Naive thymus-derived CD4-positive, alpha-beta T cell (primary cell): ENCODE measurements at regions of chr6 and their contacts with region 1.

Region 1: DNA sequence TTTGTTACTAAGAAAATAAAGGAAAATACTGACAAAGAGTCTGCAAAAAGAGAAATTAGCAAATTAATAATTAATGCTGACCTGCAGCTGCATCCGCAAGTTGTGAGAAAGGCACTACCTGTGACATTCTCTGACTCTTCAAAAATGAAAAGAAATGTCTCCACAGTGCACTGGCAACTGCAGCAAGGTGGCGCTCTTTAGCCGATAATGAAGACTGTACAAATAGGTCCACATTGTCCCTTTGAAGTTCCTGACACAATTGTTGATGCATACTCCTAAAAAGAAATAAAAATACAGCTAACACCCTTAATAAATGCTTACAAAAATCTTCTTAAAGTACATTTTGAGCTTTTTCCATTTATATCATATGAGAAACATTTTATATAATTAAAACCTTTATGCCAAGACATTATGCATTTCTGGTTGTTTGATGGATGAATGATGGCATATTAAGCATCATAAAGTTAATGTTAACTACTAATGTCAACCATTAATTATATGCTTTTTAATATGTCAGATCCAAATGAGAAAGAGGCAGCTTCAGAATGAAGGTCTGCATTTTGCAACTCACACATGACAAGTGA is 96.5 kb downstream of the MMS22L start:
- DNase-seq: peak; percentile 16 to 61 (median 48)
- ATAC-seq: peak; percentile 78
- H3K4me3 ChIP-seq: no peak overlapping the region
- H3K4me3 Mint-ChIP-seq: no peak overlapping the region
- H3K27ac ChIP-seq: no peak overlapping the region
- H3K27ac Mint-ChIP-seq: no peak overlapping the region
- H3K4me1 ChIP-seq: no peaks in the 10 kb centered on the region
- H3K4me1 Mint-ChIP-seq: peaks cover 0 to 3% (median 0%) of the 10 kb centered on the region in 7 donors
- H3K27me3 ChIP-seq: no peaks in the 10 kb centered on the region
- H3K27me3 Mint-ChIP-seq: no peaks in the 10 kb centered on the region

Region 2: DNA sequence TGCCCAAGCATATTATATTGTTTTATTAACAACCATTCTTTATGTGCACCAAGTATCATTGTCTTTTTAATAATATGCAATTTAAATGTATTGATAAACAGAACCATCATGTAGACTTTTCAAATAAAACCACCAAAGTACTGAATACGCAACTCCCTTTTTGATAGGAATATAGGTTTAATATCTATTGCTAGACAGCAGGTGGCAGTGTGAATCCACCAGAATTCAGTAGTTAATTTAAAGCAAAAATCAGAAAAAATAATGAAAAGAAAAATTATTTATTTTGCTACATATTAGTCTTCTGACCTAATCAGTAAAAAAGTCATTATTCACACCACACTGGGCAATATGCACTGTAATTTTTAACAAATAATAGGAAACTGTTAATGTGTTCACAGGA is 118.3 kb before region 1 on chr6:
- CTCF ChIA-PET with region 1: no interaction called
- POLR2A ChIA-PET with region 1: no interaction called
- intact Hi-C with region 1: loop called in 1 of 2 experiments (anchors 1 kb)
- DNase-seq: peak in 2 of 9 donors; percentile 8
- ATAC-seq: no peak
- H3K4me3 ChIP-seq: no peak overlapping the region
- H3K4me3 Mint-ChIP-seq: no peak overlapping the region
- H3K27ac ChIP-seq: no peak overlapping the region
- H3K27ac Mint-ChIP-seq: no peak overlapping the region
- H3K4me1 ChIP-seq: no peaks in the 10 kb centered on the region
- H3K4me1 Mint-ChIP-seq: no peaks in the 10 kb centered on the region
- H3K27me3 ChIP-seq: no peaks in the 10 kb centered on the region
- H3K27me3 Mint-ChIP-seq: no peaks in the 10 kb centered on the region

Region 3: DNA sequence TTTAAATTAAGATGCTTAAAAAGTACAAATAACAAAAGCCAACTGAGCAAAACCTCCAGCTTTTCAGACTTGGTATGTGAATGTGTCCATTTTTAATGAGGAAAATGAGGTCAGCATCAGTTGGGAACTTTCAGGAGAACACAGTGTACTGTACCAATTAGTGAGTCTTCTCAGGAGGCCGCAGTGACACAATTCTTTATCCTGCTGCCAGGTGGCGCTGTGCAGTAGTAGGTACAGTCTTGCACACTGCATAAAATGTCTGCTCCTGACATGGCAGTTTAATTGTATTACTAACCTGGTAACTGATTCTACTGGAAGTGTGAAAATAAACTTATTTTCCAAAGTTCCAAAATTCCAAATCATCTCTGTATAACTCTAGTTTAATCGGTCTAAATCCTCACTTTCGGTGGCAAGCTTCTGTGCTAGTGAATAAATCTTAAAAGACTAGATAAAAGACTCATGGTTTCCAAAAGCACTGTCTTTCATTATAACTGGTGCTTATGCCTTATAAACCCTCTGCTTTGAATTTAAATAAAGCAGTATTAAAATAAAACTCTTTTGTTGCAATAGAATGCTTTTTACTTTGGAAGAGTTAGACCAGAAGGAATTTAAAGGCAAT is 311.3 kb after region 1 on chr6:
- CTCF ChIA-PET with region 1: no interaction called
- POLR2A ChIA-PET with region 1: no interaction called
- intact Hi-C with region 1: loop called in 1 of 2 experiments (anchors 10 kb)
- DNase-seq: peak; percentile 12 to 54 (median 45)
- ATAC-seq: peak; percentile 90
- H3K4me3 ChIP-seq: no peak overlapping the region
- H3K4me3 Mint-ChIP-seq: no peak overlapping the region
- H3K27ac ChIP-seq: no peak overlapping the region
- H3K27ac Mint-ChIP-seq: no peak overlapping the region
- H3K4me1 ChIP-seq: no peaks in the 10 kb centered on the region
- H3K4me1 Mint-ChIP-seq: no peaks in the 10 kb centered on the region
- H3K27me3 ChIP-seq: no peaks in the 10 kb centered on the region
- H3K27me3 Mint-ChIP-seq: peaks cover 6 to 21% (median 14%) of the 10 kb centered on the region in 5 donors

Region 4: GRCh38 chr6:98433325-98434056 is 1247.0 kb after region 1 on chr6:
- CTCF ChIA-PET with region 1: no interaction called
- POLR2A ChIA-PET with region 1: no interaction called
- intact Hi-C with region 1: no loop called
- DNase-seq: no peak
- ATAC-seq: no peak
- H3K4me3 ChIP-seq: no peak overlapping the region
- H3K4me3 Mint-ChIP-seq: no peak overlapping the region
- H3K27ac ChIP-seq: no peak overlapping the region
- H3K27ac Mint-ChIP-seq: no peak overlapping the region
- H3K4me1 ChIP-seq: no peaks in the 10 kb centered on the region
- H3K4me1 Mint-ChIP-seq: peaks cover 0 to 1% (median 0%) of the 10 kb centered on the region in 7 donors
- H3K27me3 ChIP-seq: no peaks in the 10 kb centered on the region
- H3K27me3 Mint-ChIP-seq: no peaks in the 10 kb centered on the region

Region 5: GRCh38 chr6:99119109-99120031 is 1932.9 kb after region 1 on chr6:
- CTCF ChIA-PET with region 1: interaction called, 4 read pairs
- POLR2A ChIA-PET with region 1: no interaction called
- intact Hi-C with region 1: loop called in 1 of 2 experiments (anchors 1 kb)
- DNase-seq: peak in 5 of 9 donors; percentile 21 to 39 (median 30)
- ATAC-seq: no peak
- H3K4me3 ChIP-seq: no peak overlapping the region
- H3K4me3 Mint-ChIP-seq: no peak overlapping the region
- H3K27ac ChIP-seq: no peak overlapping the region
- H3K27ac Mint-ChIP-seq: no peak overlapping the region
- H3K4me1 ChIP-seq: no peaks in the 10 kb centered on the region
- H3K4me1 Mint-ChIP-seq: no peaks in the 10 kb centered on the region
- H3K27me3 ChIP-seq: peaks cover 0 to 4% of the 10 kb centered on the region in 2 donors
- H3K27me3 Mint-ChIP-seq: peaks cover 18 to 47% (median 25%) of the 10 kb centered on the region in 5 donors